Heart left ventricle (tissue), 16 donors: ENCODE measurements at regions of chr11 and their contacts with region 1.

Region 1: DNA sequence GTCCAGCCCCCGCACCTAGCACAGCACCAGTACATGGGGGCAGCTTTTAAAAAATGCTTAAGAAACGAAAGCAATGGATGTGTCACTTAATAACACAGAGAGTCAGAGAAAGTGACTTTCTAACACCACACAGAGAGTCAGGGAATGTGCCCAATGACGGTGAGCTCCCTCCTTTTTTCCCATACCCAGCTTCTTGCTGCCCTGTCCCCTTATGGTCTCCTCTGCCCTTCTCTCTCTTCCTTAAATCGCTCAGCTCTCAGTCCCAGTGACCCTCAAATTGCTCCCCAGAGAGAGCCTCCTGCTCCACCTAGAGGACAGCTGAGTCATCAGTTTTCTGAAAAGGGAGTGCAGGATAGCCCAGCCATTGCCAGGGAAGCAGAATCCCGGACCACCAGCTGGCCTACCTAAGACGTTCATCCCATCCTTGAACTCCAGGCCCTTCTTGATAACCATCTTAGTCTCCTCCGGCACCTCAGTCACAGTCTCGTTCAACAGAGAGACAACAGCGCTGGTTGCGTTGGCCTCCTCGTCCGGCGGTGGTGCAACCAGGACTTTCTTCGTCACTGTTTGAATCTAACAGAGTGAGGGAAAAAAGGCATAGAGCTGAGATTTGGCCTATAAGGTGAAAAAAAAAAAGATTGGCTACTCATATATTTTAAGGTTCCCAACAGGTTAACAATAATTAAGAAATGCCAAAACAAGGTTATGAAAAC is 113.5 kb downstream of the SLC1A2 start:
- DNase-seq: no peak
- ATAC-seq: peak in 3 of 4 donors; percentile 48 to 60 (median 59)
- H3K4me3 ChIP-seq: no peak overlapping the region
- H3K27ac ChIP-seq: peak overlapping the region in 1 of 12 donors; percentile 95
- H3K4me1 ChIP-seq: peaks cover 0 to 70% (median 2%) of the 10 kb centered on the region in 12 donors
- H3K27me3 ChIP-seq: no peaks in the 10 kb centered on the region
- CTCF ChIP-seq: peak in 9 of 12 donors; percentile 16 to 52 (median 23)
- POLR2A ChIP-seq: no peak

Region 2: GRCh38 chr11:34926101-34926830 is 379.6 kb before region 1 on chr11:
- intact Hi-C with region 1: loop called in 3 of 10 experiments (anchors 5 to 10 kb)
- DNase-seq: no peak
- ATAC-seq: peak in 3 of 4 donors; percentile 58 to 78 (median 77)
- H3K4me3 ChIP-seq: no peak overlapping the region
- H3K27ac ChIP-seq: peak overlapping the region in 1 of 12 donors; percentile 34
- H3K4me1 ChIP-seq: peaks cover 0 to 59% (median 27%) of the 10 kb centered on the region in 12 donors
- H3K27me3 ChIP-seq: no peaks in the 10 kb centered on the region
- CTCF ChIP-seq: peak; percentile 58 to 83 (median 70)
- POLR2A ChIP-seq: no peak

Region 3: DNA sequence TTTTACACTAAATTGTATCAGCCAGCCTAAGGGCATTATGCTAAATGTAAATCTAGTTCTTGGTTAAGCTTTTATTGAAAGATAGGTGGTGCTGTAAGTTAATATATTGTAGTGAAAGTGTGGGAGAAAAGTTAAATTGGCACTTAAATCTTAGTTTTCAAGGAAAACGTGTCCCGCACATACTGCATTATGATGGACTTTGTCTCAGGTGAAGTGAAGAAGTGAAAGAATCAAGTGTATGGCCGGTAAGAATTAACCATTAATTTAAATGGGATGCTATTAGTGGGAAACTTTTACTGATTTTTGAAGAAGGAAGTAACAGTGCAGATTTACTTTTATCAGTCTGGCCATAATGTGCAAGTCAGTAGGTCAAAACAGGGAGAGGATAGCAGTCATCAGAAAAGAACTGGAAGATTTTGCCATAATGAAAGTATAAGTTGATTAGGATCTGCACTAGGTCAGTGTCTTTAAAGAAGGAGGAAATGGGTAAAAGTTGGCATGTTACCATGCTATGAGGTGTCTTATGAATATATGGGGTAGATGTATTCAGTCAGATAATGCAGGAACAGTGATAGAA is 307.8 kb before region 1 on chr11:
- intact Hi-C with region 1: loop called in 2 of 10 experiments (anchors 10 kb)
- DNase-seq: no peak
- ATAC-seq: peak in 1 of 4 donors; percentile 55
- H3K4me3 ChIP-seq: no peak overlapping the region
- H3K27ac ChIP-seq: peak overlapping the region in 1 of 12 donors; percentile 19
- H3K4me1 ChIP-seq: peaks cover 0 to 15% (median 0%) of the 10 kb centered on the region in 12 donors
- H3K27me3 ChIP-seq: no peaks in the 10 kb centered on the region
- CTCF ChIP-seq: peak in 10 of 12 donors; percentile 23 to 68 (median 52)
- POLR2A ChIP-seq: no peak

Region 4: GRCh38 chr11:35363854-35364780 is 58.3 kb after region 1 on chr11:
- intact Hi-C with region 1: loop called in 1 of 10 experiments (anchors 10 kb)
- DNase-seq: peak in 4 of 5 donors; percentile 55 to 82 (median 59)
- ATAC-seq: peak; percentile 72 to 88 (median 79)
- H3K4me3 ChIP-seq: no peak overlapping the region
- H3K27ac ChIP-seq: peak overlapping the region in 11 of 12 donors; percentile 4 to 88 (median 73)
- H3K4me1 ChIP-seq: peaks cover 2 to 56% (median 30%) of the 10 kb centered on the region in 12 donors
- H3K27me3 ChIP-seq: no peaks in the 10 kb centered on the region
- CTCF ChIP-seq: no peak
- POLR2A ChIP-seq: no peak

Region 5: DNA sequence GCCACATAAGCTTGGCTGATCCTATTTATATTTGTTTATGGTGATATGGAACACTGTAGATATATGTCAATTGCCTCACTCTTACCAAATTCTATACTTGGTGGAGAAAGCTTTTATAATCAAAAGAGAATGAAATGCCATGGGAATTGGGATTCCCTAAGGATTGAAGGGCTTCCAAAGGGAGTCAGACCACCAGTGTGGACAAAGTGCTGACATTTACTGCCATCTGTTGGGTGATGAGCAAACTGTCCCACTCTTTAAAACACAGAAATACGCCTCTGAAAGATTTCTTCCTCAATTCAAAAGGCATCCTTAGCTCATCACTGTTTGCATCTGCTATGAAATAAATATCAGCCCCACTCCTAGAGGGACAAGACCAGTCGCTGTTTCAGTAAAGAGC is 106.5 kb after region 1 on chr11:
- intact Hi-C with region 1: no loop called
- DNase-seq: no peak
- ATAC-seq: no peak
- H3K4me3 ChIP-seq: no peak overlapping the region
- H3K27ac ChIP-seq: no peak overlapping the region
- H3K4me1 ChIP-seq: peaks cover 0 to 5% (median 0%) of the 10 kb centered on the region in 12 donors
- H3K27me3 ChIP-seq: peaks cover 0 to 35% (median 0%) of the 10 kb centered on the region in 9 donors
- CTCF ChIP-seq: peak in 9 of 12 donors; percentile 20 to 48 (median 27)
- POLR2A ChIP-seq: no peak